Ascending aorta (tissue), 2 donors: ENCODE measurements at regions of chrX and their contacts with region 1.

Region 1: DNA sequence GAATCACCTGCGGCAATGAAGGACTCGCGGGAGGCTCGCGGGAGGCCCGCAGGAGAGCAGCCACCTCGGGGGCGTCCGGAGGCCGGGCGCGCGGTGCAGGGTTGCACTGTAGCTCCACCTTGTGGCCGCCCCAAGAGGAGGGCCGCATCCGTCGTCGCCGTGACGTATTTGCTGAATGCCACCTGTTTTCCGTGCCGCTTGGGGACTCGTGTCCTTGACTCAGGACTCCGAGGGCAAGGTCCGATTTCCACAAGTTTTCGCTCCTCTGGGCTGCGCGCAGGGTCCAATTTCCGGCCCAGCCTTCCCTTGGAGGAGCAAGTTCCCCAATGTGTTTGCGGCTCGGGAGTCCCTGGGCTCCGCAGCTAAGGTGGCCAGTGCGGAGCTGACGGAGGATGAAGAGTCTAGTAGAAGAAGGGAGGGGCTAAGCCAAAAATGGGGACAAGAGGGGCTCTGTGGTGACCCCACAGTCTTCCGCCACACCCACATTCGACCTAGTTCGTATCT is 10.7 kb upstream of the DLG3 start:
- DNase-seq: peak; percentile 32 to 86
- H3K4me3 ChIP-seq: peak overlapping the region; percentile 51 to 58
- H3K27ac ChIP-seq: peak overlapping the region; percentile 85 to 93
- H3K4me1 ChIP-seq: peaks cover 0 to 11% of the 10 kb centered on the region in 2 donors
- H3K27me3 ChIP-seq: no peaks in the 10 kb centered on the region
- CTCF ChIP-seq: peak; percentile 58 to 70 (median 63)

Region 2: GRCh38 chrX:69615779-69616456 is 818.0 kb before region 1 on chrX and contains the start of gene EDA:
- intact Hi-C with region 1: loop called (anchors 10 kb)
- DNase-seq: peak; percentile 27 to 89
- H3K4me3 ChIP-seq: peak within 1 kb of the TSS; percentile 55 to 89
- H3K27ac ChIP-seq: peak within 1 kb of the TSS in 1 of 2 donors; percentile 21
- H3K4me1 ChIP-seq: no peaks in the 10 kb centered on the region
- H3K27me3 ChIP-seq: no peaks in the 10 kb centered on the region
- CTCF ChIP-seq: no peak
- total RNA-seq, gene EDA: 1.7 TPM

Region 3: DNA sequence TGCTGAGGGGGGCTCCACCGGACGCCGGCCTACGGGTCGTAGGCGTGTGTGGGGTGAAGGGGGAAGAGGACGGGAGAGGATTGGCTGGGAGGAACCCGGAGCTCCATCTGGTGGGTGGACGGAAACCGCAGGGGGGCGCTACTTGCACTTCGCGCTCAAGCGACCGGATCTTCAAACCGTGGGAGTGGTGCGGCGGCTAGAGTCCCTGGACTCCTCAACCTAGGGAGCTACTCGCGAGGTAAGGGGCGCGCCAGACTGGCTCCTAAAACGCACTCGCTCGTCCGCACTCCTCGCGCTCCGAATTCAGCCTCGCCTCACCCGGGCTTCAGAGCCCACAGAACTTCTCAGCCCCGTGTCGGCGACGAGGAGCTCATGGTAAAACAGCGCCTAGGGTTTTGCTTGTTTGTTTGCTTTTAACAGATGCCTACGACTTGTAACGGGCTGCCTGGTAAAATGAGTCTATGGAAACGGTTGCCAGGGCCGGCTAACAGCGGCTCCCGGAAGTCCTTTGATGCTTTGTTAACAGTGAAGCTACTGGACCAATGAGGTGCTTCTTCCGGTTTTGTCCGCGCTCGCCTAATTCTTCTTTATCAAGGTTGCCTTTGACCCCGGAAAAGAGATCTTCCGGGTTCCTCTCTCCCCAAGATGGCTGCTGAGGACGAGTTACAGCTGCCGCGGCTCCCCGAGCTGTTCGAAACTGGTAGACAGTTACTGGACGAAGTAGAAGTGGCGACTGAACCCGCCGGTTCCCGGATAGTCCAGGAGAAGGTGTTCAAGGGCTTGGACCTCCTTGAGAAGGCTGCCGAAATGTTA is 300.4 kb before region 1 on chrX and contains the start of gene IGBP1:
- intact Hi-C with region 1: loop called (anchors 5 kb)
- DNase-seq: peak; percentile 22 to 88
- H3K4me3 ChIP-seq: peak within 1 kb of the TSS; percentile 58 to 90
- H3K27ac ChIP-seq: peak within 1 kb of the TSS; percentile 69 to 89
- H3K4me1 ChIP-seq: no peaks in the 10 kb centered on the region
- H3K27me3 ChIP-seq: no peaks in the 10 kb centered on the region
- CTCF ChIP-seq: peak; percentile 38 to 55 (median 54)
- total RNA-seq, gene IGBP1: 20.1 TPM

Region 4: DNA sequence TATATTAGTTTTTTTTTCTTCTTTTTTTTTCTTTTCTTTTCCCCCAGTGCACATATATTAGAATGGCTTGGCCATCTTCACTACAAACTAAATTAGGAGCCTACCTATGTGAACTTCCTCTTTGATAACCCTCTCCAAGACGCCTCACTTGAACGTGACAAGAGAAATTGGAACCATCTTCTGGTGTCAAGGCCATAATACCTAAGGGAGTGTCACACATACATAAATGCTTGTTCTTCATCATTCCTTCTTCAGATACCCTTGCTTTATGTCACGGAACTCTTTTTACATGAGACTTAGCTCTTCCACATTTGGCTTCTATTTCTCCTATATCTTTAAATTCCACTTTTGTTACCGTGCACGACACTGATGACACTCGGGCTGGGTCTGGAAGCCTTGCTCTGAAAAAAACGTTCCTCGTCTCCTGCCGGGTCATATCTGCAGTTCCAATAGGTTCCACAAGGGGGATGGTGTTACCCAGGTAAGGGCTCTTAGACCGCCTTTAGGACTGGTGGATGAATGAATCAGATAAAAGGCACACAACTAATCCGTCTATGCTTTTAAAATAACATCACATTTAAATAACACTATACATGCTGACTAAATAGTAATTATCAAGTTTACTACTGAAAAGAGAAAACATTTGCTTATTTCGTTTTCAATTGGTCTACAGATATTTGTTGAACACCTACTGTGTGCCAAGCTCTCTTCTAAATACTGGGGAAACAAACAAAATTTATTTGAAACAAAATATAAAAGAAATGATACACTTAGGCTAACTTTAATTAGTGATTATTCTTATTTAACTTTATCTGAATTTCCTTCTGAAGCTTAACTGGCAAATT is 236.7 kb before region 1 on chrX:
- intact Hi-C with region 1: loop called (anchors 10 kb)
- DNase-seq: no peak
- H3K4me3 ChIP-seq: no peak overlapping the region
- H3K27ac ChIP-seq: no peak overlapping the region
- H3K4me1 ChIP-seq: no peaks in the 10 kb centered on the region
- H3K27me3 ChIP-seq: no peaks in the 10 kb centered on the region
- CTCF ChIP-seq: peak in 2 of 3 experiments; percentile 36 to 58

Region 5: DNA sequence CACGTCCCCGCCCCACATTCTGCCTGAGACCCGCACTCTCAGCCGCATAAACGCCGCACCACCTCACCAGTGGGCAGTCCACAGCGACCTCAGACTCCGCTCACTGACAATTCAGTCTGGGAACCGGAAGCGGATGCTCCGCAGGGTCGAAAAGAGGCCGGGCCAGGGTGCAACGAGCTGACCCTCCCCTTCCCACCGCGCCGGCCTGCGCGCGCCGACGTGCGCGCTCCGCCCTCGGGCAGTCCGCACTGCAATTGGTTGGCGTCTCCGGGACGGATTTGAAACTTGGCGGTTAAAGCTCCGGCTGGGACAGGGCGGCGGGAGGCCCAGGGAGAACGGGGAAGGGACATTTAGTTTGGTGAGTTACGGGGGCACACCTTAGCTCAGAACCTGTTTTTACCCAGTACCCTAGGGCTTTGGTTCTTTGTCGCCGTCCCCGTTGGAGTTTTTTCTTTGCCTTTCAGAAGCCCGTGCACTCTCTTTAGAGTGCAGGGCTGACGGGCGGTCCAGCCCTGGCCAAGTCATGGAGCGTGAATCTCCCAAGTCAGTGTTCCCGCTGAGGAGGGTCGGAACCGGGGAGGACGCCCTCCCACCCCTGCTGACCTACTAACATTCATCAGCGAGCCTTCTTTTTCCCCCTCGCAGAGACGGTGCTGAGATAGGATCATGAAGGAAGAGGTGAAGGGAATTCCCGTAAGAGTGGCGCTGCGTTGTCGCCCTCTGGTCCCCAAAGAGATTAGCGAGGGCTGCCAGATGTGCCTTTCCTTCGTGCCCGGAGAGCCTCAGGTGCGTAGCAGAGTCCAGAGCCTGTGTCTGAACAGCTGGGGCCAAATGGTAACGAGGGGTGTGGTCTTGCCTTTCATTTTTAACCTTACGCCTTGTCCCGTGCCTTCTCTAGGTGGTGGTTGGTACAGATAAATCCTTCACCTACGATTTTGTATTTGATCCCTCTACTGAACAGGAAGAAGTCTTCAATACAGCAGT is 143.8 kb before region 1 on chrX and contains the starts of genes KIF4A and PDZD11:
- intact Hi-C with region 1: loop called (anchors 5 kb)
- DNase-seq: peak; percentile 24 to 86
- H3K4me3 ChIP-seq: peak within 1 kb of the TSS; percentile 51 to 68
- H3K27ac ChIP-seq: peak within 1 kb of the TSS; percentile 66 to 77
- H3K4me1 ChIP-seq: peaks cover 4 to 5% of the 10 kb centered on the region in 2 donors
- H3K27me3 ChIP-seq: no peaks in the 10 kb centered on the region
- CTCF ChIP-seq: no peak
- total RNA-seq, gene KIF4A: not detected
- total RNA-seq, gene PDZD11: 17.8 TPM

Region 6: DNA sequence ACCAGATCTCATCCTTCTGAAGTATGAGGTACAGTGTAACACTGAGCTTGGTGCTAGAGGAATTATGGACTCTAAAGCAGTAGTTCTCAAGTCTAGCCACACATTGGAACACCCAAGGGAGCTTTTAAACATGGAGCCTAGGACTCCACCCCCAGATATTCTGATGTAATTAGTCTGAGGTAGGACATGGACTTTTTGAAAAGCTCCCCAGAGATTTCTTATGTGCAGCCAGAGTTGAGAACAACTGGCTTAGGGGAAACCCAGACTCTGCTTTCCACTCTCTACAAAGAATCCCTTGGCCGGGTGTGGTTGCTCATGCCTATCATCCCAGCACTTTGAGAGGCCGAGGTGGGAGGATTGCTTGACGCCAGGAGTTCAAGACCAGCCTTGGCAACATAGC is 22.4 kb before region 1 on chrX:
- intact Hi-C with region 1: no loop called
- DNase-seq: no peak
- H3K4me3 ChIP-seq: no peak overlapping the region
- H3K27ac ChIP-seq: no peak overlapping the region
- H3K4me1 ChIP-seq: no peaks in the 10 kb centered on the region
- H3K27me3 ChIP-seq: no peaks in the 10 kb centered on the region
- CTCF ChIP-seq: no peak

Region 7: DNA sequence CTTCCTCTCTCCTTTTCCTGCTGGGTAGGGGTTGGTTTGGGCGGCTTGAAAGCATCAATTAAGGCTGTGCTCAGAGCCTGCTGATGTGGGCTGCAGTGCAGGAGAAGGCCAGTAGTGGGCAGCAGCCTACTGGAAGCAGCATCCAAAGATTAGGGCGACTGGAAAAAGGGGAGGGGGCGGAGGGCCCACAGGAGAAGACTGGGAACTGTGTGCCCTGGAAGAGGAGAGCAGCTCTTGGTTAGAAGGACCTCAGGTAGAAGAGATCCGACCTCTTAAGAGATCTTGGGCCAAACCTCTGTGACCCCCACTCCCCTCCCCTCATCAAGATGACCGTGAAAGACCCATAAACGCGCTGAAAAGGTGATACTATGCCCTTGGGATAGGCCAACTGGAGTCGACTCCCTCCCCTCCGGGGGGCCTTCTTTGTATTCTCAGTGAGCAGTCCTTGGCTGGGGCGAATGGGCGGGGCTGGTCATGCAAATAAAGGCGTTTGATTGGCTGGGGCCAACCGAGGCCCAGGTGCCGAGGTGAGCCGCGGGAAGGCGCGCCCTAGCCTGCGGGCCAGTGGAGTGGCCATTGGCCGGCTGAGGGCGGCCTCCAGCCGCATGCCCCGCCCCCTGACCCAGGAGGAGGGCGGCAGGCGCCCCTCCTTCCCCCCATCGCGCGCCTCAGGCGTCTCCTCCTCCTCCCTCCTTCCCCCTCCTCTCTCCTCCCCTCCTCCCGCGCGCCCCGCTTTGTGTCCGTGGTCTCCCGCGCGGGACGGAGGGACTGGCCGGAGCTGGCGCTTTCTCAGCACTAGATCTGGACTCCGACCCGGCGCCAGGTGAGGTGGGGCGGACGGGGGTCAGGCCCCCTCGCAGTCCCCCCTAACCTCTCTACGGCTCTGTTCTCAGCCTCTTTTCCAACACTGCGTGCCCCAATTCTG is 20.8 kb after region 1 on chrX:
- intact Hi-C with region 1: loop called (anchors 2 kb)
- DNase-seq: peak; percentile 28 to 81
- H3K4me3 ChIP-seq: peak overlapping the region; percentile 51 to 63
- H3K27ac ChIP-seq: peak overlapping the region; percentile 84 to 95
- H3K4me1 ChIP-seq: no peaks in the 10 kb centered on the region
- H3K27me3 ChIP-seq: no peaks in the 10 kb centered on the region
- CTCF ChIP-seq: peak; percentile 54 to 84 (median 84)